ENCODE measurements at regions of chr3 and their contacts with region 1.

Region 1: DNA sequence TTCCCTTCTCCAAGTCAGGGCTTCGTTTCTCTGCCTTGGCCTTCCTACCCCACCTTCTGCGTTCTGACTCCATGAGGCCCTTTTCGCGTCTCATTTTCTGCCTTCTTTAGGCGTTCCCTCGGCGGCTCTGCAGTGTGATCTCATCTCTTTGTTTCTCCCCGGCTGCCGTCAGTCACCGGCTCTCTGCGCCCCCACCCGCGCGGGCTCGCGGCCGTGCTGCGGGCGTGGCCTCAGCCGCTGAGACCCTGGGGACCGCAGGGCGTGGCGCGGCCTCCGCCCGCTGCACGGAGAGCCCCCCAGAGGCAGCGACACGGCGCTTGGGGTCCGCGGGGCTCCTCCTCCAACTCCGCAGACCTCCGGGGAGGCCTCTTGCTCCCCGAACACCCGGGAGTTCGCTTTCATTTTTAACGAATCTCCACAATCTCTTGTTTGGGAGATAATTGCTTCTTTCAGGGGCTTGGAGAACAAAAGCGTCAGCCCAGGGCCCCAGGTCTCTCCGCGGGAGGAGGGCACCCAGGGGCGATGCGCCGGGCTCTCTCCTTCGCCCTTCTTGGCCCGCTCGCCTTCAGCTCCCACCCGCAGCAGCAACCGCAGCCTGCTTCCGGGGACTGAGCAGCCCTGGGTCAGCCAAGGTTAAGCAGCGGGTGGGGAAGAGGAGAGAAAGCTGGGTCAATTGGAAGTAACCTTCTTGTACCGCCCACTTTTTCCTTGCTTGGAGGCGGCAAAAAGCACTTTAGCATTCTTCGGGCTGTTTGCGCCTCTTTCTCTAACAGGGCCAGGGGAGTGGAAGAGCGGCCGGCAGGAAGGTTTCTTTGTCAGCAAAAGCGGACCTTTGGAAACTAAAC is 35.2 kb downstream of the GAP43 start:
- DNase-seq: peak; percentile 62
- H3K4me3 Mint-ChIP-seq: peak overlapping the region; percentile 93
- H3K27ac Mint-ChIP-seq: peak overlapping the region; percentile 99
- H3K4me1 Mint-ChIP-seq: peaks cover 33% of the 10 kb centered on the region
- H3K27me3 Mint-ChIP-seq: peaks cover 5% of the 10 kb centered on the region

Region 2: DNA sequence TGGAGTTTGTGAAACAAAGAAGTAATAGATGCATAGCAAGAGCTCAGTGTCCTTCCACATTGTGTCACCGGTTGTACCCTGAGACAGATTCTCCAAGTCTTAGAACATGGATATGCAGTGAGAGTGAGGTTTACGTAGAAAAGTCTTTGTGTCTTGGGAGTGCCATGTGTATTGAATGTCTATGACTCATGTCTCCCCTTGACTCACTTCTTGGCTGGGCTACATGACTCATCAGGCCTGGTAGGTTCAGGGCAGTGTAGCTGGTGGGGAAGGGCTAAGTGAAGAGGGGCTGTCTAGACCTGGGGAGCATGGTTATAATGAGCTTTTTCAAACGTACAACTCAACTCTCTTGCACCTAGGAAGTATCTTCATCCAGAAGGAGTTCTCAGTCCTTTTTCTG is 132.2 kb after region 1 on chr3:
- intact Hi-C with region 1: loop called (anchors 5 kb)
- DNase-seq: peak; percentile 17
- H3K4me3 Mint-ChIP-seq: peak overlapping the region; percentile 34
- H3K27ac Mint-ChIP-seq: peak overlapping the region; percentile 77
- H3K4me1 Mint-ChIP-seq: peaks cover 35% of the 10 kb centered on the region
- H3K27me3 Mint-ChIP-seq: peaks cover 5% of the 10 kb centered on the region

Measured in activated T-helper 2 cell treated with anti-CD3 and anti-CD28 coated beads, Interferon-gamma antibody, Interleukin-2, Interleukin-4, amounts not matched to agents 10 μg/mL and 5 μg/mL and 100 μg/mL, durations not matched to agents 14 hours and 24 hours and 36 hours (primary cell).